Transverse colon (tissue), 4 donors: ENCODE measurements at regions of chr11 and their contacts with region 1.

Region 1: GRCh38 chr11:73307323-73308002 is 613 bp upstream of the ARHGEF17 start:
- DNase-seq: peak; percentile 97
- H3K4me3 ChIP-seq: peak overlapping the region; percentile 45 to 88 (median 62)
- H3K27ac ChIP-seq: peak overlapping the region; percentile 95 to 99 (median 95)
- H3K4me1 ChIP-seq: peaks cover 3 to 52% (median 25%) of the 10 kb centered on the region in 4 donors
- H3K27me3 ChIP-seq: peaks cover 13% of the 10 kb centered on the region
- CTCF ChIP-seq: peak; percentile 74 to 96 (median 88)
- EP300 ChIP-seq: no peak
- POLR2A ChIP-seq: peak; percentile 68

Region 2: GRCh38 chr11:73342633-73343032 is 35.2 kb after region 1 on chr11:
- in situ Hi-C with region 1: loop called in 1 of 4 experiments (anchors 5 kb)
- intact Hi-C with region 1: no loop called
- DNase-seq: no peak
- H3K4me3 ChIP-seq: peak overlapping the region in 3 of 4 donors; percentile 18 to 36 (median 33)
- H3K27ac ChIP-seq: peak overlapping the region in 1 of 4 donors; percentile 30
- H3K4me1 ChIP-seq: peaks cover 5 to 26% (median 24%) of the 10 kb centered on the region in 4 donors
- H3K27me3 ChIP-seq: no peaks in the 10 kb centered on the region
- CTCF ChIP-seq: no peak
- EP300 ChIP-seq: no peak
- POLR2A ChIP-seq: no peak